ENCODE measurements at regions of chr20 and their contacts with region 1.

Region 1: GRCh38 chr20:44310664-44311639 is at the start of gene FITM2:
- DNase-seq: peak; percentile 99
- ATAC-seq: peak; percentile 97
- H3K4me3 Mint-ChIP-seq: peak within 1 kb of the TSS; percentile 91
- H3K27ac Mint-ChIP-seq: peak within 1 kb of the TSS; percentile 85
- H3K4me1 Mint-ChIP-seq: peaks cover 16% of the 10 kb centered on the region
- H3K27me3 Mint-ChIP-seq: no peaks in the 10 kb centered on the region
- CTCF ChIP-seq: peak; percentile 81
- total RNA-seq, gene FITM2: 2.0 to 2.1 TPM

Region 2: DNA sequence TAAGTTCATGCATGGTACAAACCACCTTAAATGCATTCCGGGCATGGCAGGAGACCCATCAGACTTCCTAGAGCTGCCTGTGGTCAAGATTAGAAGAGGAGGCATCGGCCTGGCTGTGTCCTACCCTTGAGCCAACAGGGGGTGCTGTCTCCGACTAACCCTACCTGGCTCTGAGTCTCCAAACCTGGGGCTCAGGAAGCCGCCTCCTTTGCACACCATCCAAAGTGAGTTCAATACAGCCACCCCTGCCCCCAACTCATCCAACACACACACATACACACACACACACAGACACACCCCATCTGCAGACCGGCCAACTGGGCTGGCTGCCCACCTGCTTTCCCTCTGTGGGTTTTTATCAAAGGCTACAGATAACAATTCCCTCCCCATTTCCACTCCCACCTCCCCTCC is 201.0 kb before region 1 on chr20:
- CTCF ChIA-PET with region 1: interaction called, 3 read pairs
- POLR2A ChIA-PET with region 1: no interaction called
- intact Hi-C with region 1: loop called (anchors 10 kb)
- DNase-seq: no peak
- ATAC-seq: no peak
- H3K4me3 Mint-ChIP-seq: no peak overlapping the region
- H3K27ac Mint-ChIP-seq: no peak overlapping the region
- H3K4me1 Mint-ChIP-seq: no peaks in the 10 kb centered on the region
- H3K27me3 Mint-ChIP-seq: peaks cover 27% of the 10 kb centered on the region
- CTCF ChIP-seq: no peak

Region 3: GRCh38 chr20:44210422-44211176 is 100.4 kb before region 1 on chr20 and contains the start of gene OSER1:
- CTCF ChIA-PET with region 1: interaction called, 444 read pairs
- POLR2A ChIA-PET with region 1: interaction called, 10 read pairs
- intact Hi-C with region 1: no loop called
- DNase-seq: peak; percentile 98
- ATAC-seq: peak; percentile 88
- H3K4me3 Mint-ChIP-seq: peak within 1 kb of the TSS; percentile 92
- H3K27ac Mint-ChIP-seq: peak within 1 kb of the TSS; percentile 92
- H3K4me1 Mint-ChIP-seq: peaks cover 46% of the 10 kb centered on the region
- H3K27me3 Mint-ChIP-seq: no peaks in the 10 kb centered on the region
- CTCF ChIP-seq: no peak
- total RNA-seq, gene OSER1: 20.9 to 23.3 TPM

Region 4: GRCh38 chr20:44222633-44223368 is 88.2 kb before region 1 on chr20:
- CTCF ChIA-PET with region 1: interaction called, 444 read pairs
- POLR2A ChIA-PET with region 1: interaction called, 25 read pairs
- intact Hi-C with region 1: no loop called
- DNase-seq: peak; percentile 26
- ATAC-seq: no peak
- H3K4me3 Mint-ChIP-seq: no peak overlapping the region
- H3K27ac Mint-ChIP-seq: peak overlapping the region; percentile 5
- H3K4me1 Mint-ChIP-seq: peaks cover 31% of the 10 kb centered on the region
- H3K27me3 Mint-ChIP-seq: no peaks in the 10 kb centered on the region
- CTCF ChIP-seq: no peak

Region 5: DNA sequence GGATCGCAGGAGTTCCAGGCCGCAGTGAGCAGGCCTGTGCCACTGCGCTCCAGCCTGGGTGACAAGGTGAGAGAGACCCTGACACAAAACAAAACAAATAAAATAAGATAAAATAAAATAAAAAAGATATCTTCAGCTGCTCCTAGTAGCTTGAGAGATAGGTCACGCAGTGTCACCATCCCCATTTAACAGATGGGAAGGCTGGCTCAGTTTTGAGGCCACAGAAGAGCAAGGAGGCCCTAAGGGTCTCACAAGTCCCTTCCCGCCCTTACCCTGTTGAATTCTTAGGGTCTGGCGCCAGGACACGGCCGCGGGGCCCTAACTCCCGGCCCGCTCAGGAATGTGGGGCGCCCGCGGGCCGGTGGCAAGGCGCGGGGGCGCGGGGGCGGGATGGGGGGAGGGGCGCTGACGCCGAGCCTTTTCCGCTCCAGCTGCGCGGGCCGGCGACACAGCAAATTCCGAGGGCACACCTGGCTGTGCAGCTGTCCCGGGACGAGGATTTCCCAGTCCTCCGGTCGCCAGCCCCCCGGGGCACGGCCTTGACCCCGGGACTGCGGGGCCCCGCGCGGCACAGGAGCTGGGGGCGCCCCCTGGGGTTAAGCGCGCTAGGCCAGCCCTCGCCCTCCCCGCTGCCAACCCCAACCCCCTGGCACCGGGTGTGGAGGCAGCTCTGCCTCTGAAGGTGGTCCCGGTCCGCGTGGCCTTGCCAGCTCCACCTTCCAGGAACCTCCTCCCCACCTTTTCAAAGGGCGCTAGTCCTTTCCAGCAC is 15.6 kb after region 1 on chr20:
- CTCF ChIA-PET with region 1: interaction called, 28 read pairs
- POLR2A ChIA-PET with region 1: interaction called, 4 read pairs
- intact Hi-C with region 1: no loop called
- DNase-seq: peak; percentile 33
- ATAC-seq: peak; percentile 79
- H3K4me3 Mint-ChIP-seq: peak overlapping the region; percentile 15
- H3K27ac Mint-ChIP-seq: peak overlapping the region; percentile 34
- H3K4me1 Mint-ChIP-seq: no peaks in the 10 kb centered on the region
- H3K27me3 Mint-ChIP-seq: no peaks in the 10 kb centered on the region
- CTCF ChIP-seq: peak; percentile 40

Region 6: GRCh38 chr20:44388466-44389023 is 77.6 kb after region 1 on chr20:
- CTCF ChIA-PET with region 1: interaction called, 10 read pairs
- POLR2A ChIA-PET with region 1: no interaction called
- intact Hi-C with region 1: no loop called
- DNase-seq: peak; percentile 89
- ATAC-seq: peak; percentile 93
- H3K4me3 Mint-ChIP-seq: no peak overlapping the region
- H3K27ac Mint-ChIP-seq: no peak overlapping the region
- H3K4me1 Mint-ChIP-seq: peaks cover 2% of the 10 kb centered on the region
- H3K27me3 Mint-ChIP-seq: peaks cover 6% of the 10 kb centered on the region
- CTCF ChIP-seq: peak; percentile 91

Region 7: DNA sequence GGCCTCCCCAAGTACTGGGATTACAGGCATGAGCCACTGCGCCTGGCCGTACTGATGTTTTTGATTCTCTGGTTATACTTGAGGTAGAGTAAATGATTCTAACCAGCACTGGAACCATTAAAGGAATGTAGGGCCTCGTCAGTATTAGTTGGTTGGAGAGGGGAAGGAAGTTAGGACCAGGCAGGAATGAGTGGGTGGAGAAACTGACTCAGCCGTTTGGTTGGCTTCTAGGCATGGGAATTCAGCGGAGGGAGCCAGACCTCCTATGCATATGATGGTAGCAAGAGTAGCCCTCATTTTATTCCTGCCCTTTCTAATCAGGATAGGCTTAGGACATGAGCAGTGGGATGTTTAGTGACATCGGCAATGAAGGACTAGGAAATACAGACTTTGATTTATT is 229.9 kb after region 1 on chr20:
- CTCF ChIA-PET with region 1: no interaction called
- POLR2A ChIA-PET with region 1: no interaction called
- intact Hi-C with region 1: no loop called
- DNase-seq: no peak
- ATAC-seq: no peak
- H3K4me3 Mint-ChIP-seq: no peak overlapping the region
- H3K27ac Mint-ChIP-seq: no peak overlapping the region
- H3K4me1 Mint-ChIP-seq: no peaks in the 10 kb centered on the region
- H3K27me3 Mint-ChIP-seq: no peaks in the 10 kb centered on the region
- CTCF ChIP-seq: no peak

Region 8: DNA sequence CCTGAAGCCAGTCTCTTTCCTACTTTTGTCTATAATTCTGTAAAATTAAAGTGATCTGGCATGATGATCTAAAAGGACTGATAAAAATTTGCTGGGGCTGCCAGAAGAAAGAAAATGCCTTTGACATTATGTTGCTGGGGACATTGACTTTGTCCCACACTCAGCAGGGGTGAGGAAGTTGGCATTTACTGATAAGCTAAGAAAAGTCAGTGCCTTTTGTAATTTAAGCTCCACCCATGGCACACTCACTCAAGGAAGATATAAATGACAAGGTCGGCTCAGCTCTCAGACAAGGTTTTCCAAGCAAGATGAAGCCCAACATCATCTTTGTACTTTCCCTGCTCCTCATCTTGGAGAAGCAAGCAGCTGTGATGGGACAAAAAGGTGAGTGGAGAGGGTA is 895.8 kb after region 1 on chr20 and contains the start of gene SEMG1:
- CTCF ChIA-PET with region 1: no interaction called
- POLR2A ChIA-PET with region 1: no interaction called
- intact Hi-C with region 1: no loop called
- DNase-seq: no peak
- ATAC-seq: no peak
- H3K4me3 Mint-ChIP-seq: no peak within 1 kb of the TSS
- H3K27ac Mint-ChIP-seq: no peak within 1 kb of the TSS
- H3K4me1 Mint-ChIP-seq: no peaks in the 10 kb centered on the region
- H3K27me3 Mint-ChIP-seq: peaks cover 33% of the 10 kb centered on the region
- CTCF ChIP-seq: no peak
- total RNA-seq, gene SEMG1: not detected